ENCODE measurements at regions of chr6 and their contacts with region 1.

Region 1: GRCh38 chr6:13355043-13355951 is 27.0 kb upstream of the TBC1D7 start:
- DNase-seq: peak; percentile 63 to 99
- H3K4me3 ChIP-seq: peak overlapping the region; percentile 10; the same call in 1 of the 2 replicates
- H3K27ac ChIP-seq: peak overlapping the region; percentile 74
- H3K4me1 ChIP-seq: peaks cover 38% of the 10 kb centered on the region
- H3K27me3 ChIP-seq: no peaks in the 10 kb centered on the region
- CTCF ChIP-seq: no peak

Region 2: DNA sequence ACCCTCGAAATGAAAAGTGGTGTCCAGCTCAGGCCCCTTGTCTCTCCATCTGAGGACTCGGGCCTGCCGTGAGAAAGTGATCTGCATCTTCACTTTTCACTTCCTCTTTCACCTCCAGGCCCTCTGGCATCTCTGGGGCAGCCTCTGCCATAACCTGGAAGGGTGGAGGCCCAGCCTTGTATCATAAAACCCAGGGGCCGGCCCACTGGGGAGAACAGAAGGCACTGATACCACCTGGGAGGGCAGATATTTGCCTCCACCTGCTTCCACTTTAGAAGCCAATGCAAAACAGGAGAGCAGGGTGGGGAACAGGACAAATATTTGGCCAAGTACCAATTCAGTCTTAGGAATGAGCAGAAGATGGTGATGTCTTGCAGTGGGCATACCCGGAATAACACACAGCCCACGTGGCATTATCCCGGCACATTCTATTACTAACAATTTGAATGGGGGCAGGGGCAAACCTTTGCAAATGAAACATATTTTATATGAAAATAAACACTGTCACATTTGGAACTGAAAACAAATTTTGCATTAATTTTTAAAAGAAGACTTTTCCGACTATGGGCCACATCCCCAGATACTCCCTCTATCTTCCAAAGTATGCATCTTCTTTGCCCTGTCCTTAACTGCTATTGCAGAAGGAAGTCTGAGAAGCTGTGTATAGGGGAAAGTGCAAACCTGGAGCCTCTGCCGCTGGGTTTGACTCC is 42.2 kb after region 1 on chr6:
- CTCF ChIA-PET with region 1: no interaction called
- POLR2A ChIA-PET with region 1: interaction called, 6 read pairs
- intact Hi-C with region 1: loop called (anchors 1 kb)
- DNase-seq: peak in 1 of 2 experiments; percentile 57
- H3K4me3 ChIP-seq: no peak overlapping the region
- H3K27ac ChIP-seq: peak overlapping the region; percentile 76
- H3K4me1 ChIP-seq: peaks cover 49% of the 10 kb centered on the region
- H3K27me3 ChIP-seq: no peaks in the 10 kb centered on the region
- CTCF ChIP-seq: no peak; the same call in 1 of the 2 replicates